K562 (cell line): ENCODE measurements at regions of chr21 and their contacts with region 1.

Region 1: GRCh38 chr21:43767984-43768867 is 7.9 kb downstream of the CSTB start:
- DNase-seq: peak; percentile 80 to 96 (median 86)
- ATAC-seq: peak; percentile 91
- H3K4me3 ChIP-seq: no peak overlapping the region
- H3K27ac ChIP-seq: peak overlapping the region; percentile 91
- H3K4me1 ChIP-seq: peaks cover 33 to 63% of the 10 kb centered on the region in 2 experiments
- H3K27me3 ChIP-seq: no peaks in the 10 kb centered on the region
- CTCF ChIP-seq: 0 out of 6 replicates have a peak, but pooled peaks of 1 of the 3 experiments have one; percentile 15
- EP300 ChIP-seq: peak; percentile 57
- POLR2A ChIP-seq: peak; percentile 66; the same call in 1 of the 2 replicates
- RAD21 ChIP-seq: no peak

Region 2: DNA sequence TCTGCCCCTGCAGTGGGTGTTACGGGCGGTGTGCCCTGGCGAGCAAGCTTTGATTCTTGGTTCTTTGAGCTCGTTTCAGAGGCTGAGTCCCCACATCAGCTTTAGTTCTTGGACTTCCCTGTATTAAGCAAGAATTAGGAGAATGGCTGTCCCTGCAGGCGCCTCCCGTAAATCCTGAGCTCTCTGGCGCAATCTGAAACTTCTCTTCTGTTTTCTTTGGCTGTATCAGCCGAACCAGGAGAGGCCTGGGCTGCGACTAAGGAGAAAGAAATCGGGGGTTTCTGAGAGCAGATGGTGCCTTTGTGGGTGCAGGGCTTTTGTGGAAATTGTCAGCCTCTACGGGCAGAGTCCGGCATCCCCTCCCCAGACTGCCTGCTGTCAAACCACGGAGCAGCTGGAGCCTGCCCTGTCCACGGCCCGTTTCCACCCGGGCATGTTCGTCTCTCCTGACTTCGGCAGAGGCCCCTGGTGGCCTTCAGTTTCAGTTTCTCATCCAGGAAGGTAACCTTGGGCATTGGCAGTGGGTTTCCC is 10.1 kb before region 1 on chr21:
- CTCF ChIA-PET with region 1: no interaction called
- POLR2A ChIA-PET with region 1: interaction called, 10 read pairs
- in situ Hi-C with region 1: no loop called
- intact Hi-C with region 1: no loop called
- DNase-seq: no peak
- ATAC-seq: no peak
- H3K4me3 ChIP-seq: no peak overlapping the region
- H3K27ac ChIP-seq: no peak overlapping the region
- H3K4me1 ChIP-seq: peaks cover 0 to 35% of the 10 kb centered on the region in 2 experiments; a peak in 1 of 5 replicates
- H3K27me3 ChIP-seq: no peaks in the 10 kb centered on the region
- CTCF ChIP-seq: no peak
- EP300 ChIP-seq: no peak
- POLR2A ChIP-seq: no peak
- RAD21 ChIP-seq: no peak